ENCODE measurements at regions of chr11 and their contacts with region 1.

Region 1: GRCh38 chr11:7677071-7677470 is 3.8 kb upstream of the CYB5R2 start:
- DNase-seq: peak; percentile 77
- H3K4me3 ChIP-seq: no peak overlapping the region
- H3K27me3 ChIP-seq: no peaks in the 10 kb centered on the region
- CTCF ChIP-seq: no peak

Region 2: GRCh38 chr11:7688238-7688826 is 11.3 kb after region 1 on chr11:
- CTCF ChIA-PET with region 1: interaction called, 10 read pairs
- POLR2A ChIA-PET with region 1: no interaction called
- DNase-seq: no peak
- H3K4me3 ChIP-seq: no peak overlapping the region
- H3K27me3 ChIP-seq: no peaks in the 10 kb centered on the region; the same call in 1 of the 2 replicates
- CTCF ChIP-seq: peak; percentile 91

Region 3: GRCh38 chr11:8192016-8192895 is 515.2 kb after region 1 on chr11:
- CTCF ChIA-PET with region 1: no interaction called
- POLR2A ChIA-PET with region 1: no interaction called
- DNase-seq: peak; percentile 3
- H3K4me3 ChIP-seq: no peak overlapping the region
- H3K27me3 ChIP-seq: peaks cover 3% of the 10 kb centered on the region; the same call in 1 of the 2 replicates
- CTCF ChIP-seq: peak; percentile 93